ENCODE measurements at regions of chr2 and their contacts with region 1.

Region 1: GRCh38 chr2:172172513-172173173 is 69.9 kb upstream of the DLX2 start:
- DNase-seq: peak; percentile 60 to 69
- ATAC-seq: peak; percentile 98 to 100 (median 99)
- H3K4me3 ChIP-seq: peak overlapping the region; percentile 40 to 69 (median 64)
- H3K27ac ChIP-seq: peak overlapping the region in 8 of 10 donors; percentile 7 to 77 (median 44)
- H3K4me1 ChIP-seq: peaks cover 0 to 13% (median 7%) of the 10 kb centered on the region in 9 donors
- H3K27me3 ChIP-seq: peaks cover 0 to 20% (median 8%) of the 10 kb centered on the region in 7 donors
- CTCF ChIP-seq: peak; percentile 56 to 96 (median 89)

Region 2: DNA sequence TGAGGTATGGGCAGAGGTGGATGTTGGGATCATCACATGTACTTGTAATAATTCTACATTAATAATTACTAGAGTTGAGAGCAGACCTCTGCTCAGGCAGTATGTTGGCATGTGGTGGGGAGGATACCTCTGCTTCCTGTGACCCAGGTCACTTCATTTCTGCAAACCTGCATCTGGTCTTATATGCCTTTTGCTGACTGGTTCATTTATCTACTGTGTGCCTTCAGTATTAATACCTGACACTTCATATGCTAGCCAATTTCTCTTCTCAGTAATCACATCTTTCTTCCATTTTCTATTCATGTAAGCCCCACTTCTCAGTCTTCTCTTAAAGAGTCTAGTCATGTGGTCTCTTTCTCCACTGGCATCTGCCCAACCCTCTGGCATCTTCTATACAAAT is 28.8 kb before region 1 on chr2:
- intact Hi-C with region 1: no loop called
- DNase-seq: no peak
- ATAC-seq: no peak
- H3K4me3 ChIP-seq: no peak overlapping the region
- H3K27ac ChIP-seq: no peak overlapping the region
- H3K4me1 ChIP-seq: no peaks in the 10 kb centered on the region
- H3K27me3 ChIP-seq: peaks cover 0 to 23% (median 6%) of the 10 kb centered on the region in 7 donors
- CTCF ChIP-seq: no peak

Region 3: GRCh38 chr2:172484253-172484652 is 311.6 kb after region 1 on chr2:
- intact Hi-C with region 1: loop called in 2 of 10 experiments (anchors 5 kb)
- DNase-seq: no peak
- ATAC-seq: no peak
- H3K4me3 ChIP-seq: no peak overlapping the region
- H3K27ac ChIP-seq: no peak overlapping the region
- H3K4me1 ChIP-seq: peaks cover 0 to 36% (median 18%) of the 10 kb centered on the region in 9 donors
- H3K27me3 ChIP-seq: no peaks in the 10 kb centered on the region
- CTCF ChIP-seq: peak in 6 of 9 donors; percentile 25 to 50 (median 36)

Region 4: DNA sequence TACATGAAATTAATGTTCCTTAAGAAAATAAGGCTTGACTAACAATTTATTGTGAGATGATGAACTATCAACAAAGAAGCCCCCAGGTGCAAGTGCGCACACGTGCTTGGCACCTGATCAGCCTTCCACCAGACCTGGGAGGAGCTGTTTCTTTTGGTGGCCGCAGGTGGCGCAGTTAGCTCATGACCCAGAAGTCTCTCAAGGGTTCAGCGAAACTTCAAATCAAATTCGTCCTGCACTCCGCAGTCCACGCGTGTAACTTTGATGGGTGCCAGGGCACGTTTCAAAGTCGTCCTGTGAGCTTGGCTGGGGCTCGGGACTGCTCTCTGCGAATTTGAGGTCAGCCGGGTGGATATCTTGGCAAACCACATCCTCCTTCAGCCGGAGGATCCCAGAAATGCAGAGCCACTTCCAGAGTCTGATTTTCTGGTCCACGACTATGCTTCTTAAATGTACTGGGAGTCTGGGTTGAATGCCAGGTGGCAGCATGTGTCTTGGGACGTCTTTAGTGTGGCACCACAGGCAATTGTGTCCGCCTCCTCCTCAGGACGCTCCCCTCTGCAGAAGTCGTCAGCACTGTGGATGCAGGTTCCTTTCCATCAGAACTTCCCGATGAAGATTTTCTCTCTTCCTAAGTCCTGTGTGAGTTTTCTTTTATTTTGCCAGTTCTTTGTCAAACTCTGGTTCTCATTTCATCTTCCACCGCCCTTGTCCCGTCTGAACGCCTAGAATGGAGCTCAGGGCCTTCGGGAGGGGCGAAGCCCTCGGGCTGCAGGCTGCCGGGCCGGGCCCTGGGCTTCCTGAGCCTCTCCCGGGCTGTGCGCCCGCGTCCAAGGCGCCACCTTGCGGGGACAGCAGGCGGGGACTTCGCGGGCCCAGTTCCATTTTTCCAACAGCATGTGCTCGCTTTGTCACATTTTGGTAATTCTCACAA is 501.7 kb after region 1 on chr2:
- intact Hi-C with region 1: loop called in 1 of 10 experiments (anchors 10 kb)
- DNase-seq: peak; percentile 16 to 55
- ATAC-seq: peak; percentile 64 to 89 (median 79)
- H3K4me3 ChIP-seq: peak overlapping the region in 3 of 10 donors; percentile 5 to 14 (median 10)
- H3K27ac ChIP-seq: no peak overlapping the region
- H3K4me1 ChIP-seq: peaks cover 0 to 4% (median 0%) of the 10 kb centered on the region in 9 donors
- H3K27me3 ChIP-seq: no peaks in the 10 kb centered on the region
- CTCF ChIP-seq: peak; percentile 38 to 74 (median 58)

Region 5: DNA sequence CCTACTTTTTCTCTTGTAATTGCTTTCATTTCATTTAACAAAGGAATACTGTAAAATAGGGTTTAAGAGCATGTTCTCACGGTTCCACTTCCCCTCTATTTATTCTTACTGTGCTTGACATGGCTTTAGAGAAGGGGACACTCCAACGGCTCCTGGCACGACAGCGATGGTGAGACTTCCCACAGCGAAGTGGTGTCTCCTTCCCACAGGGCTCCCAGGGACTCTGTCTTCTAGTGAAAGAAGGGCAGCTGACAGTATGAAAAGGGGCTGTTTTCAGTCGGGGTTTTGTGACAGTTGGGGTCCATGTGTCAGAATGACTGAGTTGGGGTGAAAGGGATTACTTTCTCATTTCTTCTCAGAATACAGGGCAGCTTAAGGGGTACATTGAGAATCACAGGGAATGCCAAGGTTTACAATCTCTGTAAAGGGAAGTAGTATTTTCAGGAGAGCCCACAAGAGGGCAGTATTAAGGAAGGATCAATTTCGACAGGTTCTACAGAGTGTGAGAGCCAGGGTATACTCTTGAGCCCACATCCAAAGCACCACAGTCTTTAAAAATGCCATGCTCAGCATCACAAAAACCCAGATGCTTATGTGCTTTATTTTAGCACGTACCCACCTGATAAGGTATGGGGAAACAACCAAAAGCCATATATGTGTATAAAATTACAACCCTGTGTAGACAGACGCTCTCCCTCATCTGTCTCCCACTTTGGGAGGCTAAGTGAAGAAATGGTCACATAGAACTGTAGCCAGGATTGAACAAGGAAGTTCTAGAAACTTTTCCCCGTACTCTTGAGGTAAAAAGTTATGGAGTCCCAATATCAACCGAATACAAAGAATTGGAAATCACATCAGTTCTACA is 531.7 kb after region 1 on chr2:
- intact Hi-C with region 1: loop called in 2 of 10 experiments (anchors 10 kb)
- DNase-seq: no peak
- ATAC-seq: peak in 5 of 8 donors; percentile 43 to 65 (median 60)
- H3K4me3 ChIP-seq: no peak overlapping the region
- H3K27ac ChIP-seq: no peak overlapping the region
- H3K4me1 ChIP-seq: no peaks in the 10 kb centered on the region
- H3K27me3 ChIP-seq: peaks cover 0 to 23% (median 3%) of the 10 kb centered on the region in 7 donors
- CTCF ChIP-seq: peak; percentile 21 to 63 (median 54)